Motor neuron (in vitro differentiated cells): ENCODE measurements at regions of chr9 and their contacts with region 1.

Region 1: GRCh38 chr9:86486891-86487837 is 133.0 kb upstream of the TUT7 start:
- ATAC-seq: peak; percentile 61 to 79 (median 72)
- H3K4me3 ChIP-seq: no peak overlapping the region
- H3K27ac ChIP-seq: no peak overlapping the region
- H3K4me1 ChIP-seq: peaks cover 3 to 7% of the 10 kb centered on the region in 2 donors

Region 2: DNA sequence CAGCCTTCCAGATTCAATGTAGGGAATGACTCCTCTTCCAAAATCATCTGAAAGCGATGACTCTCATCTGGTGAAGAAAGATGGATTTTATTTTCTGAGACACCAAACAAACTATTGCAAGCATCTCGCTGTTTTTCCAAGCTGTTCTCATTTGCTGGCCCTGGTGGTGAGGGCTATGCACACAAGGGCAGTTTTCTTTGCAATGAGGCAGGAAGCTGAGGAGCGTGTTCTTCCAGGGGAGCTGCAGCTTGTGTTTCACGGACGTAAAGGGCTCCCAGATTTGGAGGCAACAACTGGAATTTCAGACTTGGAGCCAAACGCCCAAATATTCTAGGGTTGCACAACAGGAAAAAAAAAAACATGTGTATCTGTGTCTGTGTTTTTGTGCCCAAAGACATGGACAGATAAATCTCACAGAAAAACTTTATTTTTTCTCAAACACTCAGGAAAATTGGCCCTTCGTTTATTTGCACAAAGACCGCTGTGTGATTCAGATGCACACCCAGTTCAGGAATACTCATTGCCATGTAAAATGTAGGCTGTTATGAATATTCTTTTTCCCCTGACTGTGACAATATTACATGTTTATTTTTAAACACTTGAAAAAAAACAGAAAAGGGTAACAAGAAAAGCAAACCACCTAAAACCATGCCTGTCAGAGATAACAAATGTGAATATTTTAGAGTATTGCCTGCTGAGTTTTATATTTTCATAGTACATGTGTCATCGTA is 308.8 kb after region 1 on chr9:
- in situ Hi-C with region 1: loop called in 1 of 9 experiments (anchors 25 kb)
- ATAC-seq: peak in 3 of 8 experiments; percentile 38 to 58 (median 41)
- H3K4me3 ChIP-seq: no peak overlapping the region
- H3K27ac ChIP-seq: no peak overlapping the region
- H3K4me1 ChIP-seq: peaks cover 27 to 38% of the 10 kb centered on the region in 2 donors

Region 3: GRCh38 chr9:86948074-86948929 is 461.1 kb after region 1 on chr9:
- in situ Hi-C with region 1: loop called in 2 of 9 experiments (anchors 25 kb)
- ATAC-seq: peak; percentile 13 to 40 (median 31)
- H3K4me3 ChIP-seq: peak overlapping the region; percentile 45 to 84 (median 63)
- H3K27ac ChIP-seq: peak overlapping the region in 1 of 2 donors; percentile 11
- H3K4me1 ChIP-seq: peaks cover 6 to 9% of the 10 kb centered on the region in 2 donors

Region 4: GRCh38 chr9:87324613-87325194 is 837.5 kb after region 1 on chr9:
- in situ Hi-C with region 1: loop called in 8 of 9 experiments (anchors 5 to 25 kb)
- ATAC-seq: peak in 7 of 8 experiments; percentile 25 to 74 (median 48)
- H3K4me3 ChIP-seq: no peak overlapping the region
- H3K27ac ChIP-seq: no peak overlapping the region
- H3K4me1 ChIP-seq: no peaks in the 10 kb centered on the region

Region 5: GRCh38 chr9:87336914-87337333 is 849.8 kb after region 1 on chr9:
- in situ Hi-C with region 1: loop called in 2 of 9 experiments (anchors 25 kb)
- ATAC-seq: peak; percentile 54 to 78 (median 66)
- H3K4me3 ChIP-seq: peak overlapping the region; percentile 21 to 38 (median 37)
- H3K27ac ChIP-seq: no peak overlapping the region
- H3K4me1 ChIP-seq: peaks cover 14 to 17% of the 10 kb centered on the region in 2 donors